Calu3 (cell line): ENCODE measurements at regions of chr7 and their contacts with region 1.

Region 1: DNA sequence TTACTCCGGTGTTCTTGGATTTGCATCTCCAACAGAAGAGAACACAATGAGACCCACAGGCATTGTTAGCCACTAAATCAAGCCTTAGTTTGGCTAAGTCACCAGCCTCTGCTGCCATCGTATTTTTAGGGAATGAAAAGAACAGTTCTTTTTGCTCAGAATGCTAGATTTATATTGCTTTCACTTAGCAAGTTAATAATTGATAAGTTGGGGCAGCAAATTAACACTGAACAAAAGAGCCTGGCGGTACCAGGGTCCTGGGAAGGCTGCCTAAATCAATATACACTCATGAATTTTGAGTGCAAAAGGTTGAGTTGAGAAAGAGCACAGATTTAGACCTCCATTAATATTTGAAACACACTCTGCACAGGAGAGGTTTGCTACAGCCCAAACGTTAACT is 767.7 kb downstream of the TYW1 start:
- DNase-seq: peak; percentile 11
- H3K4me3 Mint-ChIP-seq: no peak overlapping the region
- H3K27ac Mint-ChIP-seq: no peak overlapping the region
- H3K4me1 Mint-ChIP-seq: no peaks in the 10 kb centered on the region
- H3K27me3 Mint-ChIP-seq: no peaks in the 10 kb centered on the region
- CTCF ChIP-seq: no peak

Region 2: GRCh38 chr7:67696878-67697277 is 67.4 kb before region 1 on chr7:
- CTCF ChIA-PET with region 1: no interaction called
- intact Hi-C with region 1: no loop called
- DNase-seq: peak; percentile 34
- H3K4me3 Mint-ChIP-seq: peak overlapping the region; percentile 66
- H3K27ac Mint-ChIP-seq: peak overlapping the region; percentile 45
- H3K4me1 Mint-ChIP-seq: peaks cover 18% of the 10 kb centered on the region
- H3K27me3 Mint-ChIP-seq: no peaks in the 10 kb centered on the region
- CTCF ChIP-seq: no peak

Region 3: GRCh38 chr7:67753891-67754290 is 10.4 kb before region 1 on chr7:
- CTCF ChIA-PET with region 1: no interaction called
- intact Hi-C with region 1: loop called (anchors 1 kb)
- DNase-seq: peak; percentile 20
- H3K4me3 Mint-ChIP-seq: no peak overlapping the region
- H3K27ac Mint-ChIP-seq: no peak overlapping the region
- H3K4me1 Mint-ChIP-seq: no peaks in the 10 kb centered on the region
- H3K27me3 Mint-ChIP-seq: no peaks in the 10 kb centered on the region
- CTCF ChIP-seq: no peak